ENCODE measurements at regions of chr9 and their contacts with region 1.

Region 1: DNA sequence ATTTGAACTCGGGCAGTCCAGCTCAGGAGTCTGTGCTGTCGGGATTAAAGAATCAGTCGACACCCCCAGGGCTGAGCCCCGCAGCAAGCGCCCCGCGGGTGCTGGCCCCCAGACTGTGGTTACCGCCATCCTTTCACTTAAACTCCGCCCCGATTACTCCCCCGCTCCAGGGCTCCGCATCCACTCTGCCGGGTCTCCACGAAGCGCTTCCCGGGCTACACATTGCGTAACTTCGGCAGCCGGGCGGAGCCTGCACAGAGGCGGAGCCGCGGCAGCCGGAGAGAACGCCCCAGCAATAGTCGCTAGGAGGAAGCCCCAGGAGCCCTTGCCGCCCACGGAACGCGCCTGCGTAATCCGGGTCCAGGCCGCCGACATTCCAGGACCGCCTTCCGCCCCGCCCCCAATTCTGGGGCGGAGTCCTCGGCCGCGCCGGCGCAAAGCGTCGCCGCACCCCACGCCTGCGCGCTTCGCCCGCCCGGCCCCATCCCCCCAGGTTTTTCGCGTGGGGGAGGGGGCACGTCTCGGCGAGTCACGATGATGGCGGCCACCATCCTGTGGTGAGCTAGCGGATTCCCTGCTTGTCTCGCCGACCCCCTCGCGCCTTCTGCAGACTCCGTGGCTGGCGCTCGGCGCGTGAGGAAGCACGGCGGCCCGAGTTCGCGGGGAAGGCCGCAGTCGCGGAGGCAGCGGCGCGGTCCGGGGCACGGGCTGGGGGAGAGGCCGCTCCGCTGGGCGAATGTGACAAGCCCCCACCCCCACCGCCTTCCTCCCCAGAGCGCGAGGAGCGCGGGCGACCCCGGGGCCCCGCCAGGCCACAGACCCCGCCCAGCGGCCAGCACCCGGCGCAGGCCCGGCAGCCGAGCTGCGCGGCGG is at the start of gene RAD23B:
- DNase-seq: peak; percentile 97 to 100 (median 99)
- ATAC-seq: peak; percentile 94
- H3K4me3 ChIP-seq: peak within 1 kb of the TSS; percentile 78
- H3K4me3 Mint-ChIP-seq: peak within 1 kb of the TSS; percentile 89 to 99 (median 96)
- H3K27ac ChIP-seq: peak within 1 kb of the TSS; percentile 92
- H3K27ac Mint-ChIP-seq: peak within 1 kb of the TSS; percentile 85 to 97 (median 95)
- H3K4me1 ChIP-seq: peaks cover 9 to 31% of the 10 kb centered on the region in 2 donors
- H3K4me1 Mint-ChIP-seq: peaks cover 28 to 52% (median 37%) of the 10 kb centered on the region in 7 donors
- H3K27me3 ChIP-seq: no peaks in the 10 kb centered on the region
- H3K27me3 Mint-ChIP-seq: peaks cover 0 to 9% (median 0%) of the 10 kb centered on the region in 5 donors
- total RNA-seq, gene RAD23B: 48.7 to 102 (median 55.6) TPM

Region 2: DNA sequence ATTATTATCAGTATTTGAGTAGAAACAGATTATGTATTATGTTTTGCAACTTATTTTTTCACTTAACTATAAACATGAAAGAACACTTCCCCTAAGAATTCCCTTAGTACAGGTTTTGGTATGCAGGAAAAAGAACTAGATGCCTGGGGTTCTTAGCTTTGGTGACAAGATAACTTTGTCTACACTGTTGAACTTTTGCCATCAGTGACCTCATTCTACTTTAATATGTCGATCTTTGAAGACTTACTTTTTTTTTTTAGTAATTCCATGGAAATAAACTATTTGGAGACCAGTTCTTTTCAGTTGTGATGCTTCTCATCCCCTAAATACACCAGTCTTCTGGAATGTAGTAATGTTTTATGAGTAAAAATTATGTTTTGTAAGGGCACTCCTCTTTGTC is 385.8 kb before region 1 on chr9:
- CTCF ChIA-PET with region 1: no interaction called
- POLR2A ChIA-PET with region 1: no interaction called
- intact Hi-C with region 1: no loop called
- DNase-seq: no peak
- ATAC-seq: no peak
- H3K4me3 ChIP-seq: no peak overlapping the region
- H3K4me3 Mint-ChIP-seq: no peak overlapping the region
- H3K27ac ChIP-seq: no peak overlapping the region
- H3K27ac Mint-ChIP-seq: no peak overlapping the region
- H3K4me1 ChIP-seq: no peaks in the 10 kb centered on the region
- H3K4me1 Mint-ChIP-seq: no peaks in the 10 kb centered on the region
- H3K27me3 ChIP-seq: no peaks in the 10 kb centered on the region
- H3K27me3 Mint-ChIP-seq: no peaks in the 10 kb centered on the region

Region 3: DNA sequence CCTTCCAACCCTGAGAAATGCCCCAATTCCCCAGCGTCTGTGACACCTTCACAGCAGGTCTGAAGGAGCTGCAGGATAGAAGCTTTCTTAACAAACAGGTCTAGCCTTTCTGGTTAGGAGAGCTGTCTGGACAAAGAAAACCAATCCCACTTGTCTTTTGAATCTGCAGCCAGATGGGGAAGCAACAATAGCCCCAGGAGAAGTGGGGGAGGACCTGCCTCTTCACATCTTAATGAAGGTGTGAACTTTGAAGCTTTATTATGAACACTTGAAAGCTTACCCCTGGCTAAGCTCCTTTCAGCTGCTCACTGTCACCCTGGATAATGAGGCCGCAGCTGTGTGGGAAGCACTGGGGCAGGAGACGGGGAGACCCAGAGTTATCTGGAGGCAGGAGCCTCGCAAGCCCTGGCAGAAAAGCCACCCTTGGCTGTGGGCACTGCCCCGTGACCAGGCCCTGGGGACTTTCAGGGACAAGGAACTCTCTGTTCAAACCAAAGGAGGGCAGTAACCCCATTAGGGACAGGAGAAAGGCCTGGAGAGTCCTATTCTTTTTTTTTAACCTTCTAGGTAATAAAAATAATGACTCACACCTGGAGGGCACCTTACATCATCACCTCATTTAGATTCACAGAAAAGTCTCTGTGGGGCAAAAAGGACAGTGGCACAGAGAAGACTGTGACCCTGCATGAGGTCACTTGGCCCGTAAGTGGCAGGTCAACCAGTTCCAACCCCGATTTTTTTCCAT is 151.7 kb before region 1 on chr9:
- CTCF ChIA-PET with region 1: no interaction called
- POLR2A ChIA-PET with region 1: no interaction called
- intact Hi-C with region 1: no loop called
- DNase-seq: no peak
- ATAC-seq: no peak
- H3K4me3 ChIP-seq: no peak overlapping the region
- H3K4me3 Mint-ChIP-seq: no peak overlapping the region
- H3K27ac ChIP-seq: no peak overlapping the region
- H3K27ac Mint-ChIP-seq: no peak overlapping the region
- H3K4me1 ChIP-seq: no peaks in the 10 kb centered on the region
- H3K4me1 Mint-ChIP-seq: no peaks in the 10 kb centered on the region
- H3K27me3 ChIP-seq: no peaks in the 10 kb centered on the region
- H3K27me3 Mint-ChIP-seq: peaks cover 8 to 28% (median 13%) of the 10 kb centered on the region in 5 donors

Region 4: DNA sequence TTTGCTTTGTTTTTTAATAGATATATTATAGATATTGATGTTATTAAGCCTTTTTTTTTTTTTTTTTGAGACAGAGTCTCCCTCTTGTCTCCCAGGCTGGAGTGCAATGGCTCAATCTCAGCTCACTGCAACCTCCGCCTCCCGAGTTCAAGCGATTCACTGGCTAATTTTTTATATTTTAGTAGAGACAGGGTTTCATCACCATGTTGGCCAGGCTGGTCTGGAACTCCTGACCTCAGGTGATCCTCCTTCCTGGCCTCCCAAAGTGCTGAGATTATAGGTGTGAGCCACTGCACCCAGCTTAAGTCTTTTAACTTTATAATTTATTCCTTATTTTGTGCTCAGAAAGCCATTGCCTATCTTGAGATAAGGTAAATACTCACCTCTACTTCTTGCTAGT is 24.1 kb before region 1 on chr9:
- CTCF ChIA-PET with region 1: no interaction called
- POLR2A ChIA-PET with region 1: no interaction called
- intact Hi-C with region 1: no loop called
- DNase-seq: no peak
- ATAC-seq: no peak
- H3K4me3 ChIP-seq: no peak overlapping the region
- H3K4me3 Mint-ChIP-seq: no peak overlapping the region
- H3K27ac ChIP-seq: no peak overlapping the region
- H3K27ac Mint-ChIP-seq: no peak overlapping the region
- H3K4me1 ChIP-seq: no peaks in the 10 kb centered on the region
- H3K4me1 Mint-ChIP-seq: peaks cover 0 to 7% (median 0%) of the 10 kb centered on the region in 7 donors
- H3K27me3 ChIP-seq: no peaks in the 10 kb centered on the region
- H3K27me3 Mint-ChIP-seq: peaks cover 8 to 30% (median 15%) of the 10 kb centered on the region in 5 donors

Region 5: GRCh38 chr9:107299437-107299836 is 16.4 kb after region 1 on chr9:
- CTCF ChIA-PET with region 1: no interaction called
- POLR2A ChIA-PET with region 1: interaction called, 11 read pairs
- intact Hi-C with region 1: loop called (anchors 1 to 2 kb)
- DNase-seq: peak in 3 of 9 donors; percentile 6 to 22 (median 21)
- ATAC-seq: no peak
- H3K4me3 ChIP-seq: no peak overlapping the region
- H3K4me3 Mint-ChIP-seq: peak overlapping the region in 1 of 10 donors; percentile 33
- H3K27ac ChIP-seq: no peak overlapping the region
- H3K27ac Mint-ChIP-seq: peak overlapping the region in 4 of 9 donors; percentile 14 to 69 (median 20)
- H3K4me1 ChIP-seq: peaks cover 4 to 13% of the 10 kb centered on the region in 2 donors
- H3K4me1 Mint-ChIP-seq: peaks cover 29 to 55% (median 42%) of the 10 kb centered on the region in 7 donors
- H3K27me3 ChIP-seq: no peaks in the 10 kb centered on the region
- H3K27me3 Mint-ChIP-seq: no peaks in the 10 kb centered on the region

Region 6: DNA sequence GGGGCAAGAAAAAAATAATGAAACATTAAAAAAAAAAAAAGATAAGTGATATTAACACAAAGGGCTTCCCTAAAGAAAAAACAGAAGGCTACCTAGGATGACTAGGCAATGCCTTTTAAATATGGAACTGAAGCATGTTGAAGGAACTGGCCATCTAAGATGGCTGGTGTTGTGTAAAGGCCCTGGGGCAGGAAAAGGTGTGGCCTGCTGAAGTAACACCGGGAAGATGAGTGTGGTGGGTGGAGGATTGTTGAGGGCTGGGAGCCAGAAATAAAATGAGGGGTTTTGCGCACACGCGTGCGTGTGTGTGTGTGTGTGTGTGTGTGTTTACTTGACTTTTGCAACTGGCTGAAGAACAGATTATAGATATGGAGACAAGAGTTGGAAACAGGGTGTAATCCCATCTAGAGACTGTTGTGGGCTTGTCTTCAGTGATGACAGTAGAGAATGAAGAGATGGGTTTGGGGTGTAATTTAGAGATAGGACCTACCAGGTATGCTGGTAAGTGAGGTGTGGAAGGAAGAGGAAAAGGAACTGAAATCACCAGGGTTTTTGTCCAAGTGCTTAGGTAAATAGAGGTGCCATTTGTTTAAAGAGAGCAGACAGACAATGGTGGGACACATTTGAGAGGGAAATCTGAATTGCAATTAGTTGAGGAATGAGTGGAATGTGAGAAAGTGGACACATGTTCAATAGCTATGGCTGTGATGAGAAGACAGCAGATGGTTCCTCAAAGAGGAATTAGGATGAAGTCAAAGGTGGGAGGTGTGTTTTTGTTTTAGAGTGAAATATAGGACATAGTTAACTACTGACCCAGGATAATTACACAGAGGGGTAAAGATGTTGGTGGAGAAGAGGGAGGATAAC is 34.0 kb after region 1 on chr9:
- CTCF ChIA-PET with region 1: no interaction called
- POLR2A ChIA-PET with region 1: interaction called, 3 read pairs
- intact Hi-C with region 1: loop called in 1 of 2 experiments (anchors 1 kb)
- DNase-seq: no peak
- ATAC-seq: no peak
- H3K4me3 ChIP-seq: no peak overlapping the region
- H3K4me3 Mint-ChIP-seq: peak overlapping the region in 4 of 10 donors; percentile 2 to 34 (median 14)
- H3K27ac ChIP-seq: no peak overlapping the region
- H3K27ac Mint-ChIP-seq: peak overlapping the region; percentile 7 to 74 (median 47)
- H3K4me1 ChIP-seq: no peaks in the 10 kb centered on the region
- H3K4me1 Mint-ChIP-seq: peaks cover 30 to 70% (median 55%) of the 10 kb centered on the region in 7 donors
- H3K27me3 ChIP-seq: no peaks in the 10 kb centered on the region
- H3K27me3 Mint-ChIP-seq: no peaks in the 10 kb centered on the region

Region 7: GRCh38 chr9:107340920-107341632 is 58.1 kb after region 1 on chr9:
- CTCF ChIA-PET with region 1: interaction called, 3 read pairs
- POLR2A ChIA-PET with region 1: interaction called, 6 read pairs
- intact Hi-C with region 1: loop called (anchors 1 to 2 kb)
- DNase-seq: peak; percentile 55 to 84 (median 73)
- ATAC-seq: peak; percentile 85
- H3K4me3 ChIP-seq: no peak overlapping the region
- H3K4me3 Mint-ChIP-seq: peak overlapping the region in 4 of 10 donors; percentile 4 to 38 (median 24)
- H3K27ac ChIP-seq: no peak overlapping the region
- H3K27ac Mint-ChIP-seq: peak overlapping the region in 4 of 9 donors; percentile 3 to 60 (median 38)
- H3K4me1 ChIP-seq: no peaks in the 10 kb centered on the region
- H3K4me1 Mint-ChIP-seq: peaks cover 4 to 21% (median 13%) of the 10 kb centered on the region in 7 donors
- H3K27me3 ChIP-seq: no peaks in the 10 kb centered on the region
- H3K27me3 Mint-ChIP-seq: no peaks in the 10 kb centered on the region

Region 8: DNA sequence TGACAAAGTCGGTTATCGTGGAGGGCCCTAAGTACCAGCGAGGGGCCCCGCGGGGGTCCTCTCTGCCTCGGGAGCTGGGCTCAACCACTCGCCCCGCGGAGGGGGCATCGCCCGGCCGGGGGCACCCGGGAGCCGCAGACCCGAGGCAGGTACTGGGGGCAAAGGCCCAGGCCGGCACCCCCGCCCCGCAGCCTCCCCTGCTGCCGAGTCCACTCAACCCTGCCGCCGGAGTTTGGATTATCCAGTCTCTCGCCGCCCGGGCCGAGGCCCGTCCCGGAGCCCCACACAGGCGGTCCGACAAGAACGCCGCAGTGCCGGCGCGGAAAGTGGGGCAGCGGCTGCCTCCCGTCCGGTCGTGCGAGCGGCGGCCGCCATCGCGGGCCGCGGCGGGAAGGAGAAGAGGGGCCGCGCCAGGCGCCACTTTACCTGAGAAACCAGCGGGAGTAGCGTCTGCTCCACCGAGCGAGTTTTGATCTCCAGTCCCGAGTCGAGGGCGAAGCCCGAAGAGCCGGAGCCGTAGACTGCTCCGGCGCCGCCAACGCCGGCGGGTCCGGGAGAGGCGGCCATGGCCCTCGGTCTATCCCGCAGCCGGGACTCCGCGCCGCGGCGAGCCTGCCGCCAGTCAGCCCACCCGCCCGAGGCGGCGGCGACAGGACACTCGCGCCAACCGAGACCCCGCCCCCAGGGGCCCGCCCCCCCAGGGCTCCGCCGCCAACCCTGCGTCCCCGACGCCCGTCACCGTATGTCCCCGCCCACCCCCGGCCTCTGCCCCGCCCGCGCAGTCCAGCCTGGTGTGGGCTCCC is 1730.1 kb after region 1 on chr9 and contains the start of gene CTNNAL1:
- CTCF ChIA-PET with region 1: no interaction called
- POLR2A ChIA-PET with region 1: no interaction called
- intact Hi-C with region 1: loop called (anchors 5 kb)
- DNase-seq: peak; percentile 68 to 88 (median 78)
- ATAC-seq: peak; percentile 98
- H3K4me3 ChIP-seq: peak within 1 kb of the TSS; percentile 72
- H3K4me3 Mint-ChIP-seq: peak within 1 kb of the TSS; percentile 93 to 99 (median 97)
- H3K27ac ChIP-seq: peak within 1 kb of the TSS; percentile 77
- H3K27ac Mint-ChIP-seq: peak within 1 kb of the TSS; percentile 79 to 95 (median 92)
- H3K4me1 ChIP-seq: peaks cover 6 to 13% of the 10 kb centered on the region in 2 donors
- H3K4me1 Mint-ChIP-seq: peaks cover 17 to 34% (median 21%) of the 10 kb centered on the region in 7 donors
- H3K27me3 ChIP-seq: no peaks in the 10 kb centered on the region
- H3K27me3 Mint-ChIP-seq: peaks cover 0 to 22% (median 4%) of the 10 kb centered on the region in 5 donors
- total RNA-seq, gene CTNNAL1: 1.1 to 9.9 (median 2.5) TPM

Measured in naive thymus-derived CD4-positive, alpha-beta T cell (primary cell).